Vagina (tissue), 2 donors: ENCODE measurements at regions of chr17 and their contacts with region 1.

Region 1: DNA sequence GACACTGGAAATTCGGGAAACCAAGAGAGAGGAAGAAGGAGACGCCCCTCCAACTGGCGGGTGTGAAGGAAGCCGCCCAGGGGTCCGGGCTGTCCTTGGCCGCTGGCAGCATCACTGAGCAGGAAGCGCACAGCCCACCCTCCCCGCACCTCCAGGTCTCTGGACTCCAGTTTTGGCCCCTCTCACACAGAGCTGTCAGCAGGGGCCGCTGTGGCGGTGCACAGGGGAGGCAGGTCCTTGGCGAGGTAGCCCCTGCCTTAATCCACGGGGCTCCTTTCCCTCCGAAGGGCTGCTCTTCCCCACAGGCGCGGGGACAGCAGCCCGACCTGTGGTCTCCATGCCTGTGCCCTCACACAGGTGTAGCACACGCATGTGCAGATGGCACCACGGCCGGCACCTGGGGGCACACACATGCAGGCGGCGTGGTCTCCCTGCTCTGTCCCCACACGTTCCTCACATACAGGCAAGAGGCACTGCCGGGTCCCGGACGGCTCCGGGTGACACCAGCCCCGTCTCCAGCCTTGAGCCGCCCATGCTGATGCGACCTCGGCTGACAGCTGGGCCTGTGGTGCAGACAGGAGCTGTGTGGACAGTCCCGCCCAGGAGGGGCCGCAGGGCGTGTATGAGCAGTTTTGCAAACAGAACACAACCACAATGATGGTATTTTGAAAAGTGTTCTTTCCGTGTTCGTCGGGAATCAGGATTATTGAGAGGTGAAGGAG is 26.6 kb upstream of the CHMP6 start:
- DNase-seq: no peak
- H3K4me3 ChIP-seq: no peak overlapping the region
- H3K27ac ChIP-seq: no peak overlapping the region
- H3K4me1 ChIP-seq: peaks cover 22% of the 10 kb centered on the region
- H3K27me3 ChIP-seq: no peaks in the 10 kb centered on the region
- CTCF ChIP-seq: no peak
- POLR2A ChIP-seq: no peak

Region 2: GRCh38 chr17:80826955-80827645 is 137.9 kb before region 1 on chr17:
- intact Hi-C with region 1: no loop called
- DNase-seq: no peak
- H3K4me3 ChIP-seq: no peak overlapping the region
- H3K27ac ChIP-seq: peak overlapping the region; percentile 61
- H3K4me1 ChIP-seq: peaks cover 15% of the 10 kb centered on the region
- H3K27me3 ChIP-seq: no peaks in the 10 kb centered on the region
- CTCF ChIP-seq: no peak
- POLR2A ChIP-seq: no peak

Region 3: DNA sequence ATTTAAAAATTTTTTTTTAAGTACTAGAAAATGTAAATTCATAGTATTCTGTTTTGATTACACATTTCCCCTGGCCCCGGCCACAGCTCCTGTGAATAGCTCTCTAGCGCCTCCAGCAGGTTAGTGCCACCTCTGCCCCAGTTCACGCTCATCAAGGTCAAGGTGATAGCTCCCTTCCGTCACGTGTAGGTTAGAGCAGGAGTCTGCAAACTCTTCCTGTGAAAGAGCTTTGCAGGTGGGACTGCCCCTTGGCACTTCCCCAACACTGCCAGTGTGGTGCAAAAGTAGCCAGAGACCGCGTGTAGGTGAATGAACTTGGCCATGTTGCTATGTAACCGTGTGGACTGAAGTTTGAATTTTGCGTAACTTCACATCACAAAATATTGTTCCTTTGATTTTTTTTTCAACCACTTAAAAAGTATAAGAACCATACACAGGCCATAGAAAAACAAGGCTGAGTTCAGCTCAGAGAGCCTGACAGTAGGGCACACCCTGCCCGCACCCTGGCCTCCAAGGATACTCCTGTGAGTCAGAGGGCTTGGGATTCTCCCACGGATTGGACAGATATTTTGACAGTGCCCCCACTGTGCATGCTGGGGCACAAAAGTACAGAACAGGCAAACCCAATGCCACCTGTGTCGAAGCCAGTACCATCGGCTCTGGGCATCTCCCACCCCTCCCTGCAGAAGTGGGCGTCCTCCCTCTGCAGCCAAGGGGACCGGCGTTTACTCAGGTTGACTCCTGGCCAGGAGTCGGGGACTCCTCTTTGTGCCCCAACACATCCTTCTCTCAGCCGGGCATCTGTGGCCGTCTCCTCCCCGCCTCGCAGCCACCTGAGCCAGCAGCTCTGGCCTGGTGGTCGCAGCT is 65.4 kb before region 1 on chr17:
- intact Hi-C with region 1: no loop called
- DNase-seq: no peak
- H3K4me3 ChIP-seq: no peak overlapping the region
- H3K27ac ChIP-seq: no peak overlapping the region
- H3K4me1 ChIP-seq: peaks cover 17% of the 10 kb centered on the region
- H3K27me3 ChIP-seq: no peaks in the 10 kb centered on the region
- CTCF ChIP-seq: peak in 1 of 3 experiments; percentile 42
- POLR2A ChIP-seq: no peak

Region 4: GRCh38 chr17:80943346-80944145 is 21.5 kb before region 1 on chr17:
- intact Hi-C with region 1: loop called (anchors 2 kb)
- DNase-seq: no peak
- H3K4me3 ChIP-seq: no peak overlapping the region
- H3K27ac ChIP-seq: peak overlapping the region; percentile 86
- H3K4me1 ChIP-seq: peaks cover 26% of the 10 kb centered on the region
- H3K27me3 ChIP-seq: no peaks in the 10 kb centered on the region
- CTCF ChIP-seq: no peak
- POLR2A ChIP-seq: no peak